Left cardiac atrium (tissue), 4 donors: ENCODE measurements at regions of chr15 and their contacts with region 1.

Region 1: DNA sequence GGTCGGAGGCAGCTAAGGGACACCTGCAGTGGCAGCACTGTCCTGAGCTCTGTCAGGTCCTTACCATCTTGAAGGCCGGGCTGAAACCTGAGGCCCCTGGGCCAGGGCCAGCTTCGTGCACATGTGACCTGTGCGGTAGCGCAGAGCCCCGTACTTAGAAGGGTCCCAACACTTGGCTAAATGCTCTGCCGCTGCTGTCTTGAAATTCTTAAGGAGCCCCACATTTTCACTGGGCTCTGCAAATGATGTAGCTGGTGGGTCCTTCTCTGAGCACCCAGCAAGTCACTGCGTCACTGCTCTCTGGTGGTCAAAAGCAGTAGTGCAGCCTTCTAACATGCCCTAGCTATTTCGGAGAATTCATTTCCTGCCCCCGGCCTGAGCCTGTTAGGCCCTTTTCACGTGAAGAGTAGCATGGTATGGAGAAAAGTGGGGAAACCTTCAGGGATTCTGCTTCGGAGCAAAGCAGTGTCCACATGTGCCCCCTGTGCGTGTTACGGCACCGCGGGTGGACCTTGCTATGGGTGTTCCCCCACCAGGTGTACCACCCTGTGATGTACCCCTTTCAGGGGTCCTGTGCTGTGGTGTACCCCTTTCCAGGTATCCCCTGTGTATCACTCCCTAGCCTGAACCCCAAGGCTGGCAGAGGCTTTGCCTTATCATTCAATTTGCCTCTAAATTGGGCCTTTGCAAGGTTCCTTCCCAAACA is 79.7 kb downstream of the TMEM266 start:
- DNase-seq: peak; percentile 77
- ATAC-seq: peak; percentile 90

Region 2: DNA sequence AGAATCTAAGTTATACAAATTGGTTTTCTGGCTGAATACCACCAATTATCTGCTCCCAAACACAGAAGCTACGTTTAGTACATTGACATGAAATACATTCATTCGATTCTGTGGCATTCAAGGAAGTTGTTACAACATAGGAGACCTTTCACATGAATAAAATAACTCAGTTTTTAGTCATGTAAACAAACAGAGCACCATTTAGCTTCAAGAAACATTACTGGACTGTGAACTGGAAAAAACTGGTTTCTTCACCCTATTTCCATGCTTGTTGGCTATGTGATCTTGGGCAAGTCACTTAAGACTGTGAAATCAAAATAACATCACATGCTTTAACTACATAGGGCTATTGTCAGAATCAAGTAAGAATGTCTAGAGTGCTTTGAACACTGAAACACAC is 173.4 kb before region 1 on chr15:
- intact Hi-C with region 1: no loop called
- DNase-seq: no peak
- ATAC-seq: no peak

Region 3: DNA sequence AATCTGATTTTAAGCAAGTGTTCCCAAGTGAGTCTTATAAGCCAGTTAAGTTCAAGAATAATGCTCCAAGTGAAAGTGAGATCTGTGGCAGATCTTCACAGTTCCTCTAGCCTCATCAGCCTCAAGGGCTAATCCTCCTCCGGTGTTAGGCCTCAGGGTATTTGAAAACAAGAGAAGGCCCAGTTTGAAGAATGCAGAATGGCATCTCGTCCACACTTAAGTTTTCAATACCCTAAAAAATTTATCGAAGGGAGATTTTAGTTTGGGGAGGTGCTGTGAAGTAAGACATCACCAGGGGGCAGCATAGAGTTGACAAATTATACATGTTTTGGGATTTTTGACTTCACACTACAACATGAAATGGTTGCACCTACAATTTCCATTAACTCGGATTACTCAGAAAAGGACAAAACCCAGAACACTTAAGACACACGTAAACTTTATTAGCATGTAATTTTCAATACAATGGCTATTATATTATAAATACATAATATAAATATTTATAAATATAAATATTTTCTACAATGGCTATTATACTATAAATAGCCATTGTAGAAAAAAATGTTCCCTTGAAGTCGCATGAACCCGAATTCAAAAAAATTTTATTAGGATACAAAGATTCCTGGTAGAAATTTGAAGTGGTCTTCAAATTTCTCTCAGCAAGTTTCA is 82.1 kb before region 1 on chr15:
- intact Hi-C with region 1: loop called (anchors 1 to 5 kb)
- DNase-seq: no peak
- ATAC-seq: no peak

Region 4: GRCh38 chr15:76196269-76197231 is 57.0 kb after region 1 on chr15:
- intact Hi-C with region 1: no loop called
- DNase-seq: peak; percentile 55
- ATAC-seq: peak; percentile 67 to 89